Activated CD4-positive, alpha-beta memory T cell treated with anti-CD3 and anti-CD28 coated beads for 36 hours (primary cell): ENCODE measurements at regions of chr3 and their contacts with region 1.

Region 1: GRCh38 chr3:196609343-196609775 is 30.1 kb upstream of the NRROS start:
- DNase-seq: peak; percentile 97
- H3K4me3 Mint-ChIP-seq: peak overlapping the region; percentile 47
- H3K27ac Mint-ChIP-seq: peak overlapping the region; percentile 68
- H3K4me1 Mint-ChIP-seq: peaks cover 32% of the 10 kb centered on the region
- H3K27me3 Mint-ChIP-seq: no peaks in the 10 kb centered on the region

Region 2: GRCh38 chr3:196471551-196471950 is 137.8 kb before region 1 on chr3:
- CTCF ChIA-PET with region 1: no interaction called
- POLR2A ChIA-PET with region 1: no interaction called
- intact Hi-C with region 1: no loop called
- DNase-seq: no peak
- H3K4me3 Mint-ChIP-seq: no peak overlapping the region
- H3K27ac Mint-ChIP-seq: no peak overlapping the region
- H3K4me1 Mint-ChIP-seq: peaks cover 15% of the 10 kb centered on the region
- H3K27me3 Mint-ChIP-seq: no peaks in the 10 kb centered on the region

Region 3: DNA sequence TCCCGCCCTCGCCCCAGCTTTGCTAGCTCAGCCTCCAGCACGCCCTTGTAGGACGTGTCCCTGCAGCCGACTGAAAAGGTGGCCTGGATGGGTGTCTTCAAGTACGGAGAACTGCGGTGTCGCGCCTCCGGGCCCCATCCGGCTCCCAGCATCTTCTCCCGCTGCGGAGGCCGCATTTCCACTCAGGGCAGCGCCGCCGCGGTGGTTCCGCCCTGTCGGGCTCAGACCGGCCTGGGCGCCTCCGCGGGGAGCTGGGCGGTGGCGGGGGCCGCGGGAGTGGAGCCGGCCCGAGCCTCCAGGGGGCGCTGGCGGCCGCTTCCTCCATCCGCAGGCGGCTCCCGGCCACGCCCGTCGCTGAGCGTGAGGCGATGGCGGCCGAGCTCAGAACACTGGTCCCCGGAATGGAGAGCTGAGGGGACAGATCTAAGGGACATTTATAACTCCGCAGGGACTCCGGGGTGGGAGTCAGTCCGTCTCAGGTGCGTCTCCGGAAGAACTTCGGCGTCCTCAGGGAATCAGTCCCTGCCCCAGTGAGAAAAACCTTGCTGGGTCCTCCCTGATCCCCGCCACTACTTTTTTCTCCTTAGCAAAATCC is 80.6 kb before region 1 on chr3:
- CTCF ChIA-PET with region 1: interaction called, 13 read pairs
- POLR2A ChIA-PET with region 1: no interaction called
- intact Hi-C with region 1: no loop called
- DNase-seq: peak; percentile 92
- H3K4me3 Mint-ChIP-seq: peak overlapping the region; percentile 71
- H3K27ac Mint-ChIP-seq: peak overlapping the region; percentile 87
- H3K4me1 Mint-ChIP-seq: peaks cover 13% of the 10 kb centered on the region
- H3K27me3 Mint-ChIP-seq: peaks cover 2% of the 10 kb centered on the region

Region 4: GRCh38 chr3:196596355-196596754 is 13.0 kb before region 1 on chr3:
- CTCF ChIA-PET with region 1: interaction called, 22 read pairs
- POLR2A ChIA-PET with region 1: no interaction called
- intact Hi-C with region 1: no loop called
- DNase-seq: no peak
- H3K4me3 Mint-ChIP-seq: no peak overlapping the region
- H3K27ac Mint-ChIP-seq: no peak overlapping the region
- H3K4me1 Mint-ChIP-seq: peaks cover 10% of the 10 kb centered on the region
- H3K27me3 Mint-ChIP-seq: peaks cover 9% of the 10 kb centered on the region

Region 5: GRCh38 chr3:196639483-196640296 is 30.3 kb after region 1 on chr3 and contains the start of gene NRROS:
- CTCF ChIA-PET with region 1: interaction called, 43 read pairs
- POLR2A ChIA-PET with region 1: interaction called, 4 read pairs
- intact Hi-C with region 1: loop called (anchors 1 kb)
- DNase-seq: peak; percentile 86
- H3K4me3 Mint-ChIP-seq: peak within 1 kb of the TSS; percentile 88
- H3K27ac Mint-ChIP-seq: peak within 1 kb of the TSS; percentile 94
- H3K4me1 Mint-ChIP-seq: peaks cover 64% of the 10 kb centered on the region
- H3K27me3 Mint-ChIP-seq: no peaks in the 10 kb centered on the region
- total RNA-seq, gene NRROS: 24.5 to 25.3 TPM

Region 6: DNA sequence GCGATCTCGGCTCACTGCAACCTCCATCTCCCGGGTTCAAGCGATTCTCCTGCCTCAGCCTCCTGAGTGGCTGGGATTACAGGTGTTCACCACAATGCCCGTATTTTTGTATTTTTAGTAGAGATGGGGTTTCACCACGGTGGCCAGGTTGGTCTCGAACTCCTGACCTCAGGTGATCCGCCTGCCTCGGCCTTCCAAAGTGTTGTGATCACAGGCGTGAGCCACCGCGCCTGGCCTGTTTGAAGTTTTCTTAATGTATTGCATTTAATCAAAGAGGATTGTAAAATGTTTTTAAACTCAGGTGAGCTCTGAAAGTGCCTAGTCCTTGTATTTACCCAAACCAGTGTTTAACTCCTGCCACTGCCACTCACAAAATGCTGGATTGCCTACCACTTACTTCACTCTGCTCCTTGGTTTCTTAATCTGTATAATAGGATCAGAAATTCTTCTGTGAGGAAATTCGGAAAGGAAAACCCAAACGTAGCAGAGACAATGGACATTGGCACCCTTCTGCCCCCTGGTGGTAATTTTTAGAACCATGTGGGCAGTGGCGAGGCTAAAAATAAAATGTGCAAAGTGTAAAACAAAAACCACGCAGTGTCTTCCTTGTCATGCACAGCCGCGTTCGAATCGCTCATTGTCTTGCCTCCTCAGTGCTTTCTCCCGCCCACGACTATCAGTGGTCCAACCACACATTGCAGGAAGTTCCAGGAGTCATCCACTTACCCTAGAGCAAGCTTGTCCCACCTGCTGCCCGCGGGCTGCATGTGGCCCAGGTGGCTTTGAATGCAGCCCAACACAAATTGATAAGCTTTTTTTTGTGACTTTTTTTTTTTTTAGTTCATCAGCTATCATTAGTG is 75.4 kb after region 1 on chr3:
- CTCF ChIA-PET with region 1: interaction called, 294 read pairs
- POLR2A ChIA-PET with region 1: interaction called, 4 read pairs
- intact Hi-C with region 1: loop called (anchors 1 kb)
- DNase-seq: peak; percentile 80
- H3K4me3 Mint-ChIP-seq: peak overlapping the region; percentile 48
- H3K27ac Mint-ChIP-seq: peak overlapping the region; percentile 31
- H3K4me1 Mint-ChIP-seq: peaks cover 13% of the 10 kb centered on the region
- H3K27me3 Mint-ChIP-seq: no peaks in the 10 kb centered on the region

Region 7: DNA sequence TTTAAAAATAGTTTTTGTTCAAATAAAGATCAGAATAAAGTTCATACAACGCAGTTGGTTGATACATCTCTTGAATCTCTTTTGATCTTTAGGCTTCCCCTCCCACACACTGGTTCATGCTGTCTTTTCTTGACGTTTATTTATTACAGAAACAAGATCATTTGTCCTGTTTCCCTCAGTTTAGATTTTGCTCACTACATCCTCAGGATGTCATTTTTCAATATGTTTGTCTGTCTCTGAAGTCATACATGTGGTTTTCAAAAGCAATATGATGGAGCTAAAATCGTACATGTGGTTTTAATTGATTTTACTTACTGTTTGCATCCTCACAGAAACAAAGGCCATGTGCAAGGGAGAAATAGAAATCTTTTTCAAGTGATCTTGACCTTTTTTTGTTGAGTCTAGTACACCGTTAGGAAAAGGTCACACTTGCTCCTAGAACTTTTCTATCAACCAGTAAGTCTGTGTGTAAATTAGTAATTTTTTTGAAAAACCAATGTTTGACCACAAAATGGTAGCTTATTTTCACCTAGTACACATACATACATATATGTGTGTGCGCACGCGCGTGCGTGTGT is 194.6 kb after region 1 on chr3:
- CTCF ChIA-PET with region 1: interaction called, 3 read pairs
- POLR2A ChIA-PET with region 1: no interaction called
- intact Hi-C with region 1: loop called (anchors 10 kb)
- DNase-seq: no peak
- H3K4me3 Mint-ChIP-seq: no peak overlapping the region
- H3K27ac Mint-ChIP-seq: peak overlapping the region; percentile 69
- H3K4me1 Mint-ChIP-seq: peaks cover 16% of the 10 kb centered on the region
- H3K27me3 Mint-ChIP-seq: no peaks in the 10 kb centered on the region

Region 8: DNA sequence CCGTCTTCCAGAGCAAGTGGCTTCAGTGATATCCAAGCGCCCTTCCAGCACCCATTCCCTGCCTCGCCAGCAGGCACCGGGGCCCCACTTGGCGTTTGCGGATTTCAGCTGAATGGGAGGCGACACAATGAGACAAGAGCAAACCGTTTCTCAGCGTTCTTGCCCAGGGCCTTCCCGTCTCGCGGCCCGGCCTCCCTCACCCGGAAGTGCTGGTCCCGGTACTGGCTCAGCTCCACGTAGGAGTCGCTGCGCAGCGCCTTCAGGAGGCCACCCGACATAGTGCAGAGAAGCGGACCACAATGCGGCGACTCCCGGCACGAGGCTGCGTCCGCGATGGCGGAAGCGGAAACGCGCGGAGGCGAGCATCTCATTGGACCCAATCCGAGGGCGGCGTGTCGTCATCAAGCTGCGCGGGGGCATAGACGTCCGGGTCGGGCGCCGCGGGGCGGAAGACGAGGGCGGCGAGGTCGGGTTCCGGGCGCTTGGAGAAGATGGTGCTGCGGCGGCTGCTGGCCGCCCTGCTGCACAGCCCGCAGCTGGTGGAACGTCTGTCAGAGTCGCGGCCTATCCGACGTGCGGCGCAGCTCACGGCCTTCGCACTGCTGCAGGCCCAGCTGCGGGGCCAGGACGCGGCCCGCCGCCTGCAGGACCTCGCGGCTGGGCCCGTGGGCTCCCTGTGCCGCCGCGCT is 333.0 kb after region 1 on chr3 and contains the start of gene NCBP2:
- CTCF ChIA-PET with region 1: interaction called, 3 read pairs
- POLR2A ChIA-PET with region 1: no interaction called
- intact Hi-C with region 1: loop called (anchors 10 kb)
- DNase-seq: peak; percentile 100
- H3K4me3 Mint-ChIP-seq: peak within 1 kb of the TSS; percentile 98
- H3K27ac Mint-ChIP-seq: peak within 1 kb of the TSS; percentile 92
- H3K4me1 Mint-ChIP-seq: peaks cover 38% of the 10 kb centered on the region
- H3K27me3 Mint-ChIP-seq: peaks cover 2% of the 10 kb centered on the region
- total RNA-seq, gene NCBP2: 83.0 to 85.1 TPM